Activated T-helper 2 cell treated with anti-CD3 and anti-CD28 coated beads, Interferon-gamma antibody, Interleukin-2, Interleukin-4, amounts not matched to agents 10 μg/mL and 5 μg/mL and 100 μg/mL, durations not matched to agents 14 hours and 24 hours and 36 hours (primary cell): ENCODE measurements at regions of chr2 and their contacts with region 1.

Region 1: DNA sequence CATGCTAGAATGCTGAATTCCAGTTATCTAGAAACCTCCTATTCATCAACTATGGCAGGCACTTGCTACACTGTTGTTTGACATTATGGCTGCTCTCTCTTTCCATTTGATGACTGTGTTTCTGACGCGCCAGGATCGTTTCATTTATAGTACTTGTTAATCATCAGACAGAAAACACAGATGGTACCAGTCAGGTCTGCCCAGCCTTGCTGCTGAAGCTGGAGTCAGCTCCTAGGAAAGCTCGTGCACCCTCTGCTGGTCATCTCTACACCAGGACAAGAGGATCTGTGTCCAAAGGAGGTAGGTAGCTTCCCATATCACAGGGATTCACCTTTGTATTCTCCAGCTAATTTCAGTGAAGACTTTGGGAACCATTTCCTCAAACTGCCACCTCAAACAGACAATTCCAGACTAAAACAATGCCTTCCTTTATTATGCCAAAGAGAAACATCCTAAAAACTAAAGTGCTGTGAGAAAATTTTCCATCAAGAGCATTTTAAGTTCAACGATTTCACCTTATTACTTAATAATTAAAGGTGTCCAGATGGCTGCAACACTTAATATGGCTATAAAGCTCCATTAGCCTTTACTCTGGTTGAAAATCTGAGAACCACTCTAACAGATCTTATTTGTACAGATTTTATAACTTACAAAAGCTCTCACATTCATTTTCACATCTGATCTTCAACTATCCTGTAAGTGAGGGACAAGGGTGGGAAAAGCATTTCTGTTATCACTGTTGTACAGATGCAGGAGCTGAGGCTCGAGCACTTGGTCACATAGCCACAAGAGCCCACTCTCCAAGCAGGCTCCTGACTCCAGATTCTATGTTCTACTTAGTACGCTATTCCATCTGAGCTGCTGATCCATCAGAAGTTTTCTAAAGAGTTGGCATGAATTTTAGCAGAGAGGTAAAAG is 17.5 kb downstream of the METTL8 start:
- DNase-seq: peak; percentile 71
- H3K4me3 Mint-ChIP-seq: peak overlapping the region; percentile 9
- H3K27ac Mint-ChIP-seq: peak overlapping the region; percentile 91
- H3K4me1 Mint-ChIP-seq: peaks cover 34% of the 10 kb centered on the region
- H3K27me3 Mint-ChIP-seq: no peaks in the 10 kb centered on the region

Region 2: GRCh38 chr2:170973492-170974303 is 442.6 kb before region 1 on chr2:
- intact Hi-C with region 1: loop called (anchors 1 kb)
- DNase-seq: peak; percentile 75
- H3K4me3 Mint-ChIP-seq: peak overlapping the region; percentile 76
- H3K27ac Mint-ChIP-seq: peak overlapping the region; percentile 63
- H3K4me1 Mint-ChIP-seq: peaks cover 10% of the 10 kb centered on the region
- H3K27me3 Mint-ChIP-seq: no peaks in the 10 kb centered on the region

Region 3: DNA sequence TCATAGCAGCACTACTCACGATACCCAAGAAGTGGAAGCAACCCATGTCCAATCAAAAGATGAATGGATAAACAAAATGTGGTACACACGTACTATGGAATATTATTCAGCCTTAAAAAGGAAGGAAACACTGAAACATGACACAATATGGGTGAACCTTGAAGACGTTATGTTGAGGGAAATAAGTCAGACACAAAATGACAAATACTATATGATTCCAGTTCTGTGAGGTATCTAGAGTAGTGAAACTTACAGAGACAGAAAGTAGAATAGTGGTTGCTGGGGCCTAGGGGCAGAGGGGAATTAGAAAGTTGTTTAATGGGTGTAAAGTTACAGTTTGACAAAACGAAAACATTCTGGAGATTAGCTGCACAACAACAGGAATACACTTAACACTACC is 280.2 kb before region 1 on chr2:
- intact Hi-C with region 1: loop called (anchors 5 kb)
- DNase-seq: no peak
- H3K4me3 Mint-ChIP-seq: peak overlapping the region; percentile 44
- H3K27ac Mint-ChIP-seq: peak overlapping the region; percentile 94
- H3K4me1 Mint-ChIP-seq: peaks cover 23% of the 10 kb centered on the region
- H3K27me3 Mint-ChIP-seq: no peaks in the 10 kb centered on the region

Region 4: DNA sequence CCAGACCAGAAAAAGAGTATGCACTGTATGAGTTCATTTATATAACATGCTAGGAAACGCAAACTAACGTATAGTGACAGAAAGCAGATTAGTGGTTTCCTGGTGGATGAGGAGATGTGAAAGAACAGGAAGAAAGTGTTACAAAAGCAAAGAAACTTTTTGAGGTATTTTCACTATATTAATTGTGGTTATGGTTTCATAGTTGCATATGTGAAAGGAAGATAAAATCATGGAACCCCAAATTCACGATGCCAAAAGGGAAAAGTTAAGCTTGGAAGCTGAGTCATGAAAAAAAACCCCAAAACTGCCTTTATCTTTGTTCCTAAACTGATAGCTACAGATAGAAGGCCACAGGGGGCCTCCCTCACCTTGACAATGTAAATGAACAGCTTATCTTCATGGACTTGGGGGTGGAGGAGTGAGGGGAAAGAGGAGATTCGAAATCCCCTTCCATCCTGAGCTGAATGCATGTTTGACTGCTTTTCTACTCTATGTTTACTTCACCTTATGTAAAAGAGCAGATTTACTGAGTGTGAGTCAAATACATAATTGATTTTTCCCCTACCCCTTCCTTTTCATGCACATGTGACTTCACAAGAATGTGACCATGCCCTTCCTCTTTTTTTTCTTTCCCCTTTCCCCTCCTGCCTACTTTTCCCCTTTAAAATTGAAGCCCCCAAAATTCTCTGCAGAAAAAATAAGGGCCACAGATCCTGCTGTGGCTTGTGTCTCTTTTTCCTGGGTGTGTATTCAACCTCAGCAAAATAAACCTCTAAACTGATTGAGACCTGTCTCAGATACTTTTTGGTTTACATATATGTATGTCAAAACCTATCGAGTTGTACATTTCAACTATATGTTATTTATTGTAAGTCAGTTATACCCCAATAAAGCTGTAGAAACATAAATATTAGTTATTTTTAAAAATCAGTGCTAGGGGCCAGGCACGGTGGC is 155.5 kb before region 1 on chr2:
- intact Hi-C with region 1: loop called (anchors 1 kb)
- DNase-seq: no peak
- H3K4me3 Mint-ChIP-seq: no peak overlapping the region
- H3K27ac Mint-ChIP-seq: peak overlapping the region; percentile 51
- H3K4me1 Mint-ChIP-seq: peaks cover 33% of the 10 kb centered on the region
- H3K27me3 Mint-ChIP-seq: peaks cover 2% of the 10 kb centered on the region

Region 5: GRCh38 chr2:171390941-171391516 is 25.2 kb before region 1 on chr2:
- intact Hi-C with region 1: loop called (anchors 1 kb)
- DNase-seq: peak; percentile 22
- H3K4me3 Mint-ChIP-seq: no peak overlapping the region
- H3K27ac Mint-ChIP-seq: peak overlapping the region; percentile 77
- H3K4me1 Mint-ChIP-seq: peaks cover 39% of the 10 kb centered on the region
- H3K27me3 Mint-ChIP-seq: no peaks in the 10 kb centered on the region

Region 6: GRCh38 chr2:171402906-171403580 is 13.2 kb before region 1 on chr2:
- intact Hi-C with region 1: no loop called
- DNase-seq: no peak
- H3K4me3 Mint-ChIP-seq: no peak overlapping the region
- H3K27ac Mint-ChIP-seq: peak overlapping the region; percentile 40
- H3K4me1 Mint-ChIP-seq: peaks cover 51% of the 10 kb centered on the region
- H3K27me3 Mint-ChIP-seq: no peaks in the 10 kb centered on the region

Region 7: GRCh38 chr2:171553858-171554257 is 137.6 kb after region 1 on chr2:
- intact Hi-C with region 1: no loop called
- DNase-seq: no peak
- H3K4me3 Mint-ChIP-seq: no peak overlapping the region
- H3K27ac Mint-ChIP-seq: no peak overlapping the region
- H3K4me1 Mint-ChIP-seq: peaks cover 2% of the 10 kb centered on the region
- H3K27me3 Mint-ChIP-seq: peaks cover 21% of the 10 kb centered on the region